Naive thymus-derived CD8-positive, alpha-beta T cell (primary cell): ENCODE measurements at regions of chr12 and their contacts with region 1.

Region 1: GRCh38 chr12:43805860-43806736 is at the start of gene TWF1:
- DNase-seq: peak; percentile 74 to 91 (median 84)
- ATAC-seq: peak; percentile 84 to 89
- H3K4me3 Mint-ChIP-seq: peak within 1 kb of the TSS; percentile 90 to 100 (median 100)
- H3K27ac Mint-ChIP-seq: peak within 1 kb of the TSS; percentile 99 to 100 (median 100)
- H3K4me1 Mint-ChIP-seq: peaks cover 8 to 50% (median 38%) of the 10 kb centered on the region in 4 donors
- H3K27me3 Mint-ChIP-seq: no peaks in the 10 kb centered on the region
- polyA plus RNA-seq, gene TWF1: 12.7 to 21.2 (median 14.2) TPM

Region 2: GRCh38 chr12:43758728-43759563 is 47.2 kb before region 1 on chr12 and contains the starts of genes IRAK4 and PUS7L:
- POLR2A ChIA-PET with region 1: interaction called, 46 read pairs
- DNase-seq: peak; percentile 88 to 97 (median 94)
- ATAC-seq: peak; percentile 92 to 93
- H3K4me3 Mint-ChIP-seq: peak within 1 kb of the TSS; percentile 78 to 99 (median 98)
- H3K27ac Mint-ChIP-seq: peak within 1 kb of the TSS; percentile 98 to 100 (median 99)
- H3K4me1 Mint-ChIP-seq: peaks cover 34 to 88% (median 75%) of the 10 kb centered on the region in 4 donors
- H3K27me3 Mint-ChIP-seq: no peaks in the 10 kb centered on the region
- polyA plus RNA-seq, gene IRAK4: 23.7 to 31.5 (median 26.9) TPM
- polyA plus RNA-seq, gene PUS7L: 29.9 to 42.9 (median 38.6) TPM

Region 3: GRCh38 chr12:43835656-43836474 is 29.8 kb after region 1 on chr12 and contains the start of gene TMEM117:
- POLR2A ChIA-PET with region 1: interaction called, 82 read pairs
- DNase-seq: peak; percentile 31 to 76 (median 60)
- ATAC-seq: peak; percentile 74 to 80
- H3K4me3 Mint-ChIP-seq: peak within 1 kb of the TSS; percentile 76 to 98 (median 88)
- H3K27ac Mint-ChIP-seq: peak within 1 kb of the TSS; percentile 84 to 95 (median 91)
- H3K4me1 Mint-ChIP-seq: peaks cover 20 to 59% (median 56%) of the 10 kb centered on the region in 4 donors
- H3K27me3 Mint-ChIP-seq: no peaks in the 10 kb centered on the region
- polyA plus RNA-seq, gene TMEM117: 2.1 to 2.2 (median 2.1) TPM

Region 4: DNA sequence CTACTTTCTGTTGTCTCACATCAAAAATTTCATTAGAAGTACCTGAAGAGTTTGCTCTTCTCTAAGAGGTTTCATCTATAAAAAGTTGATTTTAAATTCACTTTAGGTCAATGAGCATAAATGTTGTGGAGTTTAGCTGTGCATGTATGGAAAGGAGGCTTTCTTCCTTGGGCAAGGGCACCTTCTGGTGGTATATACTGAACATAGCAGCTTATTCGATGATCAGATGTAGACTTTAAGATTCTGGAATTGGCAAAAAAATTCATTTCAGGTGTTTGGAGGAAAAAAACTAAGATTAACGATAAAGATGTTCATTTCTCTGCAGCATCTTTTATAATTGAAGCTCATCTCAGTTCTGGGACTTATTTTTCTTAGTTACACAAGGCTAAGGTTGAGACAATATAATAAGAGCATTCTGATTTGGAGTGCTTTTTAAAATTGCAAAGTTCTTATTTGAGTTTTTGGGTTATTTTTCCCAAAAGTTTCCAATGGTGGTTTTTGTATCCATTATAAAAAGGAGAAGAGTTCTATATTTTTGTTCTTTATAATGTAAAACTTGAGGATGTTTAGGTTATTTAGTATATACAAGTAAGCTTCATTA is 76.6 kb after region 1 on chr12:
- POLR2A ChIA-PET with region 1: interaction called, 14 read pairs
- DNase-seq: peak in 9 of 10 donors; percentile 4 to 64 (median 33)
- ATAC-seq: peak; percentile 78 to 87
- H3K4me3 Mint-ChIP-seq: no peak overlapping the region
- H3K27ac Mint-ChIP-seq: no peak overlapping the region
- H3K4me1 Mint-ChIP-seq: no peaks in the 10 kb centered on the region
- H3K27me3 Mint-ChIP-seq: no peaks in the 10 kb centered on the region